Upper lobe of right lung (tissue), 1 donor: ENCODE measurements at regions of chr3 and their contacts with region 1.

Region 1: DNA sequence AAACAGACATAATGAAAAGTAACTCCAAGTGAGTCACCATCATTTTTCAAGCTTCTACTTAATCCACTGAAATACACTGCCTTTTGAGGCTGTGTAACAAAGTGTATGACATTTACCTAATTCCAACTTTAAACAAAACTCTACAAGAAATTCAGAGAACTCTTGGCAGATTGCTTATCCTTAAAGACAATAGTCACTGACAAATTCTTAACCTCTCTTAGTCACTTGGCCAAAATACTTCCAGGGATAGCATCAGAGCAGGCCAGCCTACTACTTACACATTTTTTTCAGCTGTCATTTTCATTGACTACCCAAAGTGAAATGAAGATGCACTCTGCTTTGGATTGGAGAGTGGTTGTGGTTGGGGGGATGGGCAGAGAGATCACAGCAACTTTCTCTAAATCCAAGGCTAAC is 3.6 kb downstream of the WWTR1 start:
- DNase-seq: no peak
- ATAC-seq: no peak
- H3K4me3 ChIP-seq: peak overlapping the region; percentile 75
- H3K27ac ChIP-seq: no peak overlapping the region
- H3K4me1 ChIP-seq: peaks cover 28% of the 10 kb centered on the region
- H3K27me3 ChIP-seq: peaks cover 6% of the 10 kb centered on the region
- CTCF ChIP-seq: no peak

Region 2: GRCh38 chr3:149581681-149582370 is 72.4 kb before region 1 on chr3:
- intact Hi-C with region 1: loop called (anchors 5 kb)
- DNase-seq: no peak
- ATAC-seq: peak; percentile 89
- H3K4me3 ChIP-seq: no peak overlapping the region
- H3K27ac ChIP-seq: no peak overlapping the region
- H3K4me1 ChIP-seq: peaks cover 63% of the 10 kb centered on the region
- H3K27me3 ChIP-seq: no peaks in the 10 kb centered on the region
- CTCF ChIP-seq: no peak